OCI-LY7 (cell line): ENCODE measurements at regions of chr6 and their contacts with region 1.

Region 1: GRCh38 chr6:6008648-6009421 is 2.1 kb upstream of the NRN1 start:
- DNase-seq: peak; percentile 95
- H3K4me3 ChIP-seq: peak overlapping the region; percentile 73
- H3K27ac ChIP-seq: peak overlapping the region; percentile 72
- H3K4me1 ChIP-seq: peaks cover 29% of the 10 kb centered on the region
- CTCF ChIP-seq: no peak

Region 2: GRCh38 chr6:4889701-4890100 is 1119.1 kb before region 1 on chr6:
- CTCF ChIA-PET with region 1: no interaction called
- POLR2A ChIA-PET with region 1: no interaction called
- intact Hi-C with region 1: loop called (anchors 5 kb)
- DNase-seq: no peak
- H3K4me3 ChIP-seq: no peak overlapping the region
- H3K27ac ChIP-seq: no peak overlapping the region
- H3K4me1 ChIP-seq: peaks cover 43% of the 10 kb centered on the region
- CTCF ChIP-seq: no peak

Region 3: DNA sequence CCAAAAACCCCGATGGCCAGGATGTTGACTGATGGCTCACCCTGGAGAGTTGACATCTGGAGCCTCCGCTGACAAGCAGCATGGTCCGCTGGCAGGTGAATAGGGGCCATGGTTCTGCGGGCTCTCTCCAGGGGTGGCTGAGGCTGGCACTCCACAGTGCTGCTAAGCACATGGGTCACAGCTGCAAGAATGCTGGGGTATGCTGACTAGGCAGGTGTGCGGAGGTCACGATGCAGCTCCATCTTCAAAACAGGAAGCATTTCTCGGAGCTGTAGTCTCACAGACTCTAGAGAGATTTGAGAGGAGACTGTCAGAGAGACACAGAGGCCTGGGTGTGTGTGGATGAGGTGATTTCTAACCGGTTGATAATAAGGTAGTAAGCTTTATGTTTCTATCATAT is 343.7 kb before region 1 on chr6:
- CTCF ChIA-PET with region 1: interaction called, 13 read pairs
- POLR2A ChIA-PET with region 1: no interaction called
- intact Hi-C with region 1: no loop called
- DNase-seq: peak; percentile 81
- H3K4me3 ChIP-seq: no peak overlapping the region
- H3K27ac ChIP-seq: peak overlapping the region; percentile 19
- H3K4me1 ChIP-seq: peaks cover 20% of the 10 kb centered on the region
- CTCF ChIP-seq: no peak

Region 4: GRCh38 chr6:6390849-6391602 is 382.2 kb after region 1 on chr6:
- CTCF ChIA-PET with region 1: no interaction called
- POLR2A ChIA-PET with region 1: no interaction called
- intact Hi-C with region 1: loop called (anchors 10 kb)
- DNase-seq: peak; percentile 90
- H3K4me3 ChIP-seq: peak overlapping the region; percentile 61
- H3K27ac ChIP-seq: peak overlapping the region; percentile 92
- H3K4me1 ChIP-seq: peaks cover 100% of the 10 kb centered on the region
- CTCF ChIP-seq: no peak